ENCODE measurements at regions of chr4 and their contacts with region 1.

Region 1: DNA sequence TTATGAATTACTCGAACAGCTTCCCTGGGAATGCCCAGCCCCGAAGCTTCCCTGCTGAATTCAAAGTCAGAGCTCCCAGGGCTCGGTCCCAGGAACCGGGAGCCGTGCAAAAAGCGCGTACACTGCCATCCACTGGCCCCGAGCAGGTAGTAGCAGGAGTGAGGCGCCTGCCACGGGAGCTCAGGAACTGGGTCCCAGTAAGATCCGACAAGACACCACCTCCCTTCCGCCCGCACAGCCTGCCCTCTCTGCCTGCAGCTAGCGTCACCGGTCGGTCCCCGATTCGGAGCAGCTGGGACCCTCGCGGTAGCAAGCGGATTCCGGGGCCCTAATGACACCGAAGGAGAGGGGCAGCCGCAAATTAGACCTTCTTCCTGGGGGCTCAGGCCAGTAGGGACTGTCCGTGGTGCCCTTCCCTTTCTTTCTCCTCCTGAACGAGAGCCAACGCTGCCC is 1.2 kb downstream of the CORIN start:
- DNase-seq: peak; percentile 58 to 98 (median 83)

Region 2: GRCh38 chr4:46993075-46994006 is 843.3 kb before region 1 on chr4 and contains the start of gene GABRA4:
- intact Hi-C with region 1: no loop called
- DNase-seq: peak in 8 of 10 donors; percentile 58 to 96 (median 74)

Region 3: GRCh38 chr4:47668810-47669408 is 167.8 kb before region 1 on chr4:
- intact Hi-C with region 1: loop called (anchors 2 kb)
- DNase-seq: peak in 1 of 10 donors; percentile 16

Region 4: DNA sequence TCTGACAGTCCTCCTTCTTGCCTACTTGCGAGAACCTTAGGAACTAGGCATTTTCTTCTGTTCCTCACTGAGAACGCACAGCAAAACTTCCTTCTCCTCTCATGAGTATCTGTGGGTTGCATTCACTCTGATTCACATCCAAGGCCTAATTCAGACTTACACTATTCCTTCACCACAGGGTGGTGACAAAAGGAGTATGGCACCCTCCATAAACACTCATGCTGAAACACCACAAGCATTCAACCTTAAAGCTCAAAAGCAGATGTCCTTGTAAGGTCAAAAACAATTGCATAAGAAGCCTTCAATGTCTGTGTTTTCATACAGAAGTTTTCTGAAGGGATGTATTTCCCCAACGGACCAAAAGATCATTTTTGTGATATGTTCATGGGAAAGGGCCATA is 146.1 kb before region 1 on chr4:
- intact Hi-C with region 1: no loop called
- DNase-seq: no peak

Region 5: DNA sequence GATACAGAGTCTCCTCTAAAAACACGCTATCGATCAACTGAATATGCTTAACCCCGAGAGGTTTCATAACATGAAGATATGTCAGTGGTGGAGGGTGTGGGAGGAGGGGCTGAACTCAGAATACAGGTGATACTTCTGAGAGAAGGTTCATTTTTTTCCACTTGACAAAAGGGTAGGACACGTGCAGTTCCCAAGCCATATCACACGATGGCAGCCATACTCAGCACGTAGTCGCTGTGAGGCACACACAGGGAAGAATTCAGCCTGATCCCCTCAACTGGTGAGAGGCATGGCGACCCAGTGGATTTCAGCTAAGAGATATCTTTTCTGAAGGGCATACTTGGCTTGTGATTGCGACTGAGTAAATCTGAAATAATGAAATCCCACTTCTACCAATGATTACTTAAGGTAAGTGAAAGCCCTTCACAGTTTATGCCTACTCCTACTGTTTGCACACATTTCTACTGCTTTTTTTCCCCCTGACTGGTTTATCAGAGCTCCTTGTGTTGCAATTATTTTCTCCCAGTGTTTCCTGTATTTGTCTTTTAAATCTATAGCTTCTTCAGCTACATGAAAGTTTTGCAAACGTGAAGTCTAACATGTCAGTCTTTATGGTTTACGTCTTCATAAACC is 131.9 kb before region 1 on chr4:
- intact Hi-C with region 1: loop called (anchors 2 kb)
- DNase-seq: peak in 7 of 10 donors; percentile 15 to 90 (median 43)

Region 6: GRCh38 chr4:47744253-47744652 is 92.4 kb before region 1 on chr4:
- intact Hi-C with region 1: no loop called
- DNase-seq: no peak